ENCODE measurements at regions of chr1 and their contacts with region 1.

Region 1: GRCh38 chr1:84298328-84298683 is 3.2 kb upstream of the SAMD13 start:
- DNase-seq: peak; percentile 70
- H3K4me3 ChIP-seq: peak overlapping the region; percentile 62 to 78 (median 74)
- H3K27ac ChIP-seq: peak overlapping the region; percentile 81 to 86 (median 82)
- H3K4me1 ChIP-seq: peaks cover 0 to 39% (median 26%) of the 10 kb centered on the region in 4 donors
- H3K27me3 ChIP-seq: no peaks in the 10 kb centered on the region
- CTCF ChIP-seq: no peak
- EP300 ChIP-seq: no peak
- POLR2A ChIP-seq: no peak

Region 2: DNA sequence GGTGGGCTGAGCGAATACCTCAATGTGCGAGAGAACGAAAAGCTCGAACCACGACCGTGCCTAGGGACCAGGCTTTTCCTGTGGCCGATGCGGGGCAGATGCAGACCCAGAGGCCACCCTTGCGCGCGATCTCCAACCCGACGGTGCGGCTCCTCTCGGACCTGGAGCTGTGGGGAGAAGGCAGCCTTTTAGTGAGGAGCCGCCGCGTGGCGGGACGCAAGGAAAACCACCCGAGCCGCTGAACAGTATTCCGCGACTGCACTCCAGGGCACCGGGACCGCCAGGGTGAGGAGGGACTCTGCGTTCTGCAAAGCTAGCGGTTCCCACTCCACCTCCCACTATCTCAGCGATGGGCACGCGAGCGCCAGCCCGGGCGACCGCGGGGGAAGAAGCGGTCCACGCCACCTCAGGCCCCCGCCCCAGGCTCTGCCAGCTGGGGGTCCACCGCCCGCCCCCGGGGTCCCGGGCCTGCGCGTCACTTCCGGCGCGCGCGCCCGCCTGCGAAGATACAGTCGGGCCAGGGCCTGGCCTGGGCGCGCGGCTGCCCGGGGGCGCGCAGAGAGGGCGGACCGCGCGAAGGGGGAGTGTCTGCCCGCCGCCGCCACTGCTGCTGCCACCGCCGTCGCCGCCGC is 220.7 kb before region 1 on chr1:
- intact Hi-C with region 1: loop called (anchors 5 kb)
- DNase-seq: peak; percentile 78
- H3K4me3 ChIP-seq: peak overlapping the region; percentile 76 to 97 (median 95)
- H3K27ac ChIP-seq: peak overlapping the region; percentile 91 to 94 (median 93)
- H3K4me1 ChIP-seq: peaks cover 0 to 22% (median 17%) of the 10 kb centered on the region in 4 donors
- H3K27me3 ChIP-seq: no peaks in the 10 kb centered on the region
- CTCF ChIP-seq: no peak
- EP300 ChIP-seq: no peak
- POLR2A ChIP-seq: peak; percentile 9 to 32

Region 3: GRCh38 chr1:84406346-84406861 is 108.1 kb after region 1 on chr1:
- intact Hi-C with region 1: no loop called
- DNase-seq: no peak
- H3K4me3 ChIP-seq: no peak overlapping the region
- H3K27ac ChIP-seq: no peak overlapping the region
- H3K4me1 ChIP-seq: no peaks in the 10 kb centered on the region
- H3K27me3 ChIP-seq: no peaks in the 10 kb centered on the region
- CTCF ChIP-seq: no peak
- EP300 ChIP-seq: no peak
- POLR2A ChIP-seq: no peak

Region 4: GRCh38 chr1:84510668-84511067 is 212.4 kb after region 1 on chr1:
- intact Hi-C with region 1: no loop called
- DNase-seq: no peak
- H3K4me3 ChIP-seq: no peak overlapping the region
- H3K27ac ChIP-seq: no peak overlapping the region
- H3K4me1 ChIP-seq: peaks cover 0 to 13% (median 5%) of the 10 kb centered on the region in 4 donors
- H3K27me3 ChIP-seq: no peaks in the 10 kb centered on the region
- CTCF ChIP-seq: no peak
- EP300 ChIP-seq: no peak
- POLR2A ChIP-seq: no peak

Measured in sigmoid colon (tissue), 7 donors.